Activated CD8-positive, alpha-beta T cell treated with anti-CD3 and anti-CD28 coated beads for 36 hours (primary cell): ENCODE measurements at regions of chr21 and their contacts with region 1.

Region 1: GRCh38 chr21:26170471-26171257 is at the start of gene APP:
- DNase-seq: peak; percentile 85
- ATAC-seq: peak; percentile 91
- H3K4me3 Mint-ChIP-seq: peak within 1 kb of the TSS; percentile 89
- H3K27ac Mint-ChIP-seq: peak within 1 kb of the TSS; percentile 76
- H3K4me1 Mint-ChIP-seq: peaks cover 17% of the 10 kb centered on the region
- H3K27me3 Mint-ChIP-seq: peaks cover 10% of the 10 kb centered on the region
- CTCF ChIP-seq: peak; percentile 93
- total RNA-seq, gene APP: 39.3 to 39.4 TPM

Region 2: DNA sequence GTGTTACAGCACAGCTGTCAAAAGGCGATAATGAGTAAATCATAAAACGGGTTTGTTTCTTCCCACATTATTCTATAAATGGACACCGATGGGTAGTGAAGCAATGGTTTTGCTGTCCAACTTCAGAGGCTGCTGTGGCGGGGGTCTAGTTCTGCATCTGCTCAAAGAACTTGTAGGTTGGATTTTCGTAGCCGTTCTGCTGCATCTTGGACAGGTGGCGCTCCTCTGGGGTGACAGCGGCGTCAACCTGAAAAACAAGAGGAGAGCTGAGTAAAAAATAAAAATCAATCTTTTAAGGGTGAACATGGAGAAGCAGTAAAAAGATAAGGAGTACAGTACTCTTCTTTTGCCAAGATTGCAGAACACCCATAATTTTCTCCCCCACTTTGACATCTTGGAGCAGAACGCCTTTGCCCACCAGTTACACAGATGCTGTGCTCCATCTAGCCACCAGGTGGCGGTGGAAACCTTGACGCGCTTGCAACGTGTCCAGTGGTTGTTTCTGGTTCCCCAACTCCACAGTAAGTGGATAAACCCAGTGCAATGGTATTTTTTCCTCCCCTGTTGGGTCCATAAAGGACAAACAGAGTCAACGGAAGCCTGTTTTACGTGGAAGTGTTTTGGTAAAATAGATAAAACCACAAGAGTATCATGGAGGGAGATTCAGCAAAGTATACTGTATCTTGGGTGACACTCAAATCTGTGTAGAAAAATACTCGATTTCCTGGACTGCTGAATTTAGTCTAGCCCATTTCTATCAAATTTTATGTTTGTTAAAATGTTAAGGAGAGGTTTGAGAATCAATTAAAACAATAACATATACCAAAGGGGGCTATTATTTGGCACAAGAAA is 288.9 kb before region 1 on chr21:
- CTCF ChIA-PET with region 1: interaction called, 4 read pairs
- POLR2A ChIA-PET with region 1: no interaction called
- intact Hi-C with region 1: loop called (anchors 5 kb)
- DNase-seq: peak; percentile 75
- ATAC-seq: peak; percentile 83
- H3K4me3 Mint-ChIP-seq: no peak overlapping the region
- H3K27ac Mint-ChIP-seq: no peak overlapping the region
- H3K4me1 Mint-ChIP-seq: no peaks in the 10 kb centered on the region
- H3K27me3 Mint-ChIP-seq: no peaks in the 10 kb centered on the region
- CTCF ChIP-seq: peak; percentile 89

Region 3: DNA sequence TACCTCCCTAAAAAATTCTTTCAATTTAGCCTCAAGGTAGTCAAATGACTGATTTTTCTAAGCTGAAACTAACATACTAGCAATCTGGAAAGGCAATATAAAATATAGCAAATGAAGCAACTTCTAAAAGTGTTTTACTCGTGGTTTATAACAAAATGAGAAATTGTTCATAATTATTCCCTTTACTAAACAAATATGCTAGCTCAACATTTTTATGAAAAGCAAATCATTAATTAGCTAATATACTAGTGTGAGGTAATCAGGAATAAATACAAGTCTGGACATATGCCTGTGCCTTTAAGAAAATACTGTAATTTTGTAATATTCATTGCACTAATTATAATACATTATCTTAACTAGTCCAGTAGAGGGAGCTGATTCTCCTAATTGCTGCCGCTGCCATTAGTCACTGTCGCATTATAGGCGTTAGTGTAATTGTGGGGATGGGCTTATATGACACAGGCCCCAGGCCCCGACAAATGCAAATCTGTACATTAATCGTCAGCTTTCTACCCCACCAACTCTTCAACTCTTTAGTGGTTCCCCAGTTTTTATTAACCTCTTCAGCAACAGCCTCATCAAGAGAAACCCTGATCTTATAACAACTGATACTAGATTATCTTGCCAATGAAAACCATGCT is 275.0 kb before region 1 on chr21:
- CTCF ChIA-PET with region 1: interaction called, 17 read pairs
- POLR2A ChIA-PET with region 1: no interaction called
- intact Hi-C with region 1: loop called (anchors 5 kb)
- DNase-seq: peak; percentile 17
- ATAC-seq: peak; percentile 79
- H3K4me3 Mint-ChIP-seq: no peak overlapping the region
- H3K27ac Mint-ChIP-seq: no peak overlapping the region
- H3K4me1 Mint-ChIP-seq: no peaks in the 10 kb centered on the region
- H3K27me3 Mint-ChIP-seq: no peaks in the 10 kb centered on the region
- CTCF ChIP-seq: peak; percentile 63

Region 4: DNA sequence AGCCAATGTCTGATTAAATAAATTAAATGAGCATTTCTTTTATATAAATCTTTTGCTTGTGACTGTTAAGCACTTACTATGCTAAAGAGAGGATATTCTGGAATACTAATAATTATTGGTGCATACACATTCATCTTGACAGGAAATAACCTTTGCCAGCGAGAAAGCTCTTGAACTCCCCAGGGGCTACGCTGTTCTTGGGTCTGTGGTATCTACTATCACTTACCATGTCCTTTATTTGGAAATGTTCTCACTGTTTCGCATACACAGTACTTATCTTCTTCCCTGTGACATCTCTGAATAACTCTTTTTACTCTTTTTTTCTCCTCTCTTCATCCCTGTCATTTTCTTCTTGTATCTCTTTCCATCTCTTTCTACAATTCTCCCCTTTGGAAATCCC is 257.2 kb before region 1 on chr21:
- CTCF ChIA-PET with region 1: no interaction called
- POLR2A ChIA-PET with region 1: no interaction called
- intact Hi-C with region 1: no loop called
- DNase-seq: no peak
- ATAC-seq: no peak
- H3K4me3 Mint-ChIP-seq: no peak overlapping the region
- H3K27ac Mint-ChIP-seq: no peak overlapping the region
- H3K4me1 Mint-ChIP-seq: no peaks in the 10 kb centered on the region
- H3K27me3 Mint-ChIP-seq: no peaks in the 10 kb centered on the region
- CTCF ChIP-seq: no peak

Region 5: DNA sequence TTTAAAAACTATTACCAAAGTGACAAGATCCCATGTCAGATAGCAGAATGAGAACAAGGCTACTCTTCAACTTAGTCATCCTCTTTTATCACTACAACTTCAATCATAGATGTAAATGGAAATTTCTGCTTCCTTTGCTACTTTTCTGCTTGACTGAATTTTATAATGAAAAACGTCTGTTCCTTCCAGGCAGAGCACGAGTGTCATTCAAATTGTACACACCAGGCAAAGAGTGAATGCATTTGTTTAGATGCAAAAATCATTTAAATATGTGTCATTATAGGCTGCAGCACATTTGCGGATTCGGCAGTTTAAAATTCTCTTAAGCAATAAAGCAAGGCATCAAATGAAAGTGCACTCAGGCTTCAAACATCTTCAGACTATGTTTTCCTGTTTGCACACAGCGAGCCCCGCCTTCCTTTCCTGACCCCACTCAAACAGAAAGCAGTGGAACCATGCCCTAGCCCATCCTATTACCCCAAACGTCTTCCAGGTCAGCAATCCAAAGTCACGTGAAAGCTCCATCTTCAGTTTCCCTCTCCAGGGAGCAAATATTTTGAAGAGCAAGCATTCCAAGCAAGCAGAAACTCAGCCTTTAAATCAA is 99.7 kb before region 1 on chr21:
- CTCF ChIA-PET with region 1: interaction called, 5 read pairs
- POLR2A ChIA-PET with region 1: no interaction called
- intact Hi-C with region 1: loop called (anchors 10 kb)
- DNase-seq: peak; percentile 42
- ATAC-seq: peak; percentile 58
- H3K4me3 Mint-ChIP-seq: peak overlapping the region; percentile 68
- H3K27ac Mint-ChIP-seq: peak overlapping the region; percentile 83
- H3K4me1 Mint-ChIP-seq: peaks cover 42% of the 10 kb centered on the region
- H3K27me3 Mint-ChIP-seq: no peaks in the 10 kb centered on the region
- CTCF ChIP-seq: no peak

Region 6: GRCh38 chr21:26148840-26149354 is 21.8 kb before region 1 on chr21:
- CTCF ChIA-PET with region 1: interaction called, 10 read pairs
- POLR2A ChIA-PET with region 1: interaction called, 5 read pairs
- intact Hi-C with region 1: no loop called
- DNase-seq: no peak
- ATAC-seq: no peak
- H3K4me3 Mint-ChIP-seq: no peak overlapping the region
- H3K27ac Mint-ChIP-seq: no peak overlapping the region
- H3K4me1 Mint-ChIP-seq: peaks cover 13% of the 10 kb centered on the region
- H3K27me3 Mint-ChIP-seq: no peaks in the 10 kb centered on the region
- CTCF ChIP-seq: no peak